T-cell (primary cell): ENCODE measurements at regions of chr16 and their contacts with region 1.

Region 1: GRCh38 chr16:68093816-68094613 is 8.8 kb downstream of the NFATC3 start:
- DNase-seq: peak in 2 of 35 experiments; percentile 14 to 62
- ATAC-seq: peak; percentile 77 to 86 (median 80)
- H3K4me3 ChIP-seq: no peak overlapping the region
- H3K4me3 Mint-ChIP-seq: peak overlapping the region; percentile 21 to 50 (median 35)
- H3K27ac ChIP-seq: peak overlapping the region; percentile 47
- H3K27ac Mint-ChIP-seq: peak overlapping the region; percentile 76 to 79
- H3K4me1 ChIP-seq: peaks cover 37 to 45% of the 10 kb centered on the region in 2 experiments
- H3K4me1 Mint-ChIP-seq: peaks cover 89 to 91% (median 91%) of the 10 kb centered on the region in 3 donors
- H3K27me3 ChIP-seq: no peaks in the 10 kb centered on the region
- H3K27me3 Mint-ChIP-seq: no peaks in the 10 kb centered on the region

Region 2: GRCh38 chr16:68116256-68116867 is 22.3 kb after region 1 on chr16:
- CTCF ChIA-PET with region 1: interaction called, 4 to 16 read pairs
- POLR2A ChIA-PET with region 1: interaction called in 1 of 2 experiments, 11 read pairs
- DNase-seq: peak in 5 of 35 experiments; percentile 14 to 68 (median 21)
- ATAC-seq: peak; percentile 38 to 68 (median 53)
- H3K4me3 ChIP-seq: no peak overlapping the region
- H3K4me3 Mint-ChIP-seq: peak overlapping the region in 1 of 3 donors; percentile 8
- H3K27ac ChIP-seq: no peak overlapping the region
- H3K27ac Mint-ChIP-seq: peak overlapping the region; percentile 32 to 72
- H3K4me1 ChIP-seq: peaks cover 42% of the 10 kb centered on the region in 2 experiments
- H3K4me1 Mint-ChIP-seq: peaks cover 86 to 94% (median 91%) of the 10 kb centered on the region in 3 donors
- H3K27me3 ChIP-seq: no peaks in the 10 kb centered on the region
- H3K27me3 Mint-ChIP-seq: no peaks in the 10 kb centered on the region

Region 3: GRCh38 chr16:68128577-68129305 is 34.7 kb after region 1 on chr16:
- CTCF ChIA-PET with region 1: interaction called in 1 of 2 experiments, 12 read pairs
- POLR2A ChIA-PET with region 1: no interaction called
- DNase-seq: no peak
- ATAC-seq: no peak
- H3K4me3 ChIP-seq: no peak overlapping the region
- H3K4me3 Mint-ChIP-seq: no peak overlapping the region
- H3K27ac ChIP-seq: no peak overlapping the region
- H3K27ac Mint-ChIP-seq: peak overlapping the region; percentile 85 to 89
- H3K4me1 ChIP-seq: peaks cover 10 to 24% of the 10 kb centered on the region in 2 experiments
- H3K4me1 Mint-ChIP-seq: peaks cover 49 to 70% (median 70%) of the 10 kb centered on the region in 3 donors
- H3K27me3 ChIP-seq: no peaks in the 10 kb centered on the region
- H3K27me3 Mint-ChIP-seq: no peaks in the 10 kb centered on the region

Region 4: GRCh38 chr16:68214726-68215125 is 120.7 kb after region 1 on chr16:
- CTCF ChIA-PET with region 1: interaction called in 1 of 2 experiments, 6 read pairs
- POLR2A ChIA-PET with region 1: interaction called, 3 to 11 read pairs
- DNase-seq: no peak
- ATAC-seq: no peak
- H3K4me3 ChIP-seq: no peak overlapping the region
- H3K4me3 Mint-ChIP-seq: no peak overlapping the region
- H3K27ac ChIP-seq: no peak overlapping the region
- H3K27ac Mint-ChIP-seq: peak overlapping the region; percentile 83 to 84
- H3K4me1 ChIP-seq: peaks cover 6 to 19% of the 10 kb centered on the region in 2 experiments
- H3K4me1 Mint-ChIP-seq: peaks cover 32 to 53% (median 48%) of the 10 kb centered on the region in 3 donors
- H3K27me3 ChIP-seq: no peaks in the 10 kb centered on the region
- H3K27me3 Mint-ChIP-seq: no peaks in the 10 kb centered on the region